Vagina (tissue), 2 donors: ENCODE measurements at regions of chr12 and their contacts with region 1.

Region 1: GRCh38 chr12:54558759-54559158 is 9.4 kb downstream of the PDE1B start:
- DNase-seq: no peak
- H3K4me3 ChIP-seq: no peak overlapping the region
- H3K27ac ChIP-seq: no peak overlapping the region
- H3K4me1 ChIP-seq: peaks cover 8% of the 10 kb centered on the region
- H3K27me3 ChIP-seq: no peaks in the 10 kb centered on the region
- CTCF ChIP-seq: no peak
- POLR2A ChIP-seq: no peak

Region 2: GRCh38 chr12:54535474-54535873 is 23.3 kb before region 1 on chr12:
- intact Hi-C with region 1: loop called (anchors 1 kb)
- DNase-seq: no peak
- H3K4me3 ChIP-seq: no peak overlapping the region
- H3K27ac ChIP-seq: no peak overlapping the region
- H3K4me1 ChIP-seq: no peaks in the 10 kb centered on the region
- H3K27me3 ChIP-seq: no peaks in the 10 kb centered on the region
- CTCF ChIP-seq: no peak
- POLR2A ChIP-seq: no peak